SK-N-SH (cell line): ENCODE measurements at regions of chrX and their contacts with region 1.

Region 1: GRCh38 chrX:130079824-130080406 is 30.4 kb downstream of the ELF4 start:
- DNase-seq: peak; percentile 75
- H3K4me3 ChIP-seq: no peak overlapping the region
- H3K27ac ChIP-seq: no peak overlapping the region
- H3K4me1 ChIP-seq: peaks cover 0 to 17% of the 10 kb centered on the region in 2 experiments; a peak in 1 of 4 replicates
- H3K27me3 ChIP-seq: peaks cover 17% of the 10 kb centered on the region; the same call in 1 of the 2 replicates
- CTCF ChIP-seq: peak; percentile 91
- EP300 ChIP-seq: no peak
- RAD21 ChIP-seq: peak; percentile 92

Region 2: GRCh38 chrX:130091958-130092522 is 12.1 kb after region 1 on chrX:
- CTCF ChIA-PET with region 1: interaction called, 19 read pairs
- POLR2A ChIA-PET with region 1: no interaction called
- DNase-seq: no peak
- H3K4me3 ChIP-seq: no peak overlapping the region
- H3K27ac ChIP-seq: no peak overlapping the region
- H3K4me1 ChIP-seq: no peaks in the 10 kb centered on the region; a peak in 1 of 4 replicates
- H3K27me3 ChIP-seq: peaks cover 3% of the 10 kb centered on the region; the same call in 1 of the 2 replicates
- CTCF ChIP-seq: no peak
- EP300 ChIP-seq: no peak
- RAD21 ChIP-seq: no peak

Region 3: DNA sequence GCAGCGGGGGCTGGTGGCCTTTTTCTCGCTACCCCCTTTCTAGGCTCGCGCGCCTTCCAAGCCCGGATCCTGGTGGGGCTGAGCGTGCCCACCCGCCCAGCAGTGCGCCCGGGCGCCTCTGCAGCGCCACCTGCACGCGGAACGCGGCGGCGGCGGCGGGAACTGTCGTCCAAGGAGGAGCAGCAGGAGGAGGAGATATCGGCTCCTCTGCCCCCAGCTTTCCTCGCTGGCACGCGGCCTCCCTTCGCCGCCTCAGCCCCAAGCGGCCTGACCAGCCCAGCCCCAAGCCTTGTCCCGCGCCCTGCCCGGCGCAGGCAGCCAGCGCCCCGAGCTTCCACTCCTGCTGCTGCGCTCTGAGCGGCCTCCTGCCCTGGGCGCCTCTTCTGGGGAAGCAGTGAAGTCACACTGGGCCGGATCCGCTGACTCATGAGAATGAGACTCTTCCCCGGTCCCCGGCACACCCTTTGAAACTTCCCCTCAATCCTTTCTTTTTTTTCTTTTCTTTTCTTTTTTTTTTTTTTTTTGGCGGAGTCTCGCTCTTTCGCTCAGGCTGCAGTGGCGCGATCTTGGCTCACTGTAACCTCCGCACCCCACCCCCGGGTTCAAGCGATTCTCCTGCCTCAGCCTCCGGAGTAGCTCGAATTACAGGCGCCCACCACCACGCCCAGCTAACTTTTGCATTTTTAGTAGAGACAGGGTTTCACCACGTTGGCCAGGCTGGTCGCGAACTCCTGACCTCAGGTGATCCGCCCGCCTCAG is 41.0 kb after region 1 on chrX:
- CTCF ChIA-PET with region 1: interaction called, 26 read pairs
- POLR2A ChIA-PET with region 1: no interaction called
- DNase-seq: peak; percentile 86
- H3K4me3 ChIP-seq: peak overlapping the region; percentile 31 to 57
- H3K27ac ChIP-seq: peak overlapping the region in 1 of 2 experiments; percentile 39; a peak in 1 of 4 replicates
- H3K4me1 ChIP-seq: peaks cover 9 to 27% of the 10 kb centered on the region in 2 experiments; a peak in 3 of 4 replicates
- H3K27me3 ChIP-seq: no peaks in the 10 kb centered on the region; the same call in 1 of the 2 replicates
- CTCF ChIP-seq: peak; percentile 78
- EP300 ChIP-seq: no peak
- RAD21 ChIP-seq: no peak; the same call in 1 of the 2 replicates

Region 4: GRCh38 chrX:130186651-130187050 is 106.7 kb after region 1 on chrX:
- CTCF ChIA-PET with region 1: interaction called, 113 read pairs
- POLR2A ChIA-PET with region 1: no interaction called
- DNase-seq: peak; percentile 37
- H3K4me3 ChIP-seq: no peak overlapping the region
- H3K27ac ChIP-seq: no peak overlapping the region
- H3K4me1 ChIP-seq: peaks cover 0 to 6% of the 10 kb centered on the region in 2 experiments; a peak in 1 of 4 replicates
- H3K27me3 ChIP-seq: peaks cover 24% of the 10 kb centered on the region; the same call in 1 of the 2 replicates
- CTCF ChIP-seq: no peak
- EP300 ChIP-seq: no peak
- RAD21 ChIP-seq: no peak

Region 5: DNA sequence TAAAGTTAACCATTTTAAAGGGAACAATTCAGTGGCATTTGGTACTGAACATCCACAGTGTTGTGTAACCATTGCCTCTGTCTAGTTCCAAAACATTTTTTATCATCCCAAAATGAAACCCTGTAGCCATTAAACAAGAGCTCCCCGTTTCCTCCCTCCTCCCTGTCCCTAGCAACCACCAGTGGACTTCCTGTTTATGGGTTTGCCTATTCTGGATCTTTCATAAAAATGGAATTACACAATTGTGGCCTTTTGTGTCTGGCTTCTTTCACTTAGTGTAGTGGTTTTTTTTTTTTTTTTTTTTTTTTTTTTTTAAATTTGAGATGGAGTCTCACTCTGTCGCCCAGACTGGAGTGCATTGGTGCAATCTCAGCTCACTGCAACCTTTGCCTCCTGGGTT is 333.5 kb after region 1 on chrX:
- CTCF ChIA-PET with region 1: no interaction called
- POLR2A ChIA-PET with region 1: no interaction called
- DNase-seq: no peak
- H3K4me3 ChIP-seq: no peak overlapping the region
- H3K27ac ChIP-seq: no peak overlapping the region
- H3K4me1 ChIP-seq: no peaks in the 10 kb centered on the region
- H3K27me3 ChIP-seq: no peaks in the 10 kb centered on the region
- CTCF ChIP-seq: no peak
- EP300 ChIP-seq: no peak
- RAD21 ChIP-seq: no peak